ENCODE measurements at regions of chr17 and their contacts with region 1.

Region 1: DNA sequence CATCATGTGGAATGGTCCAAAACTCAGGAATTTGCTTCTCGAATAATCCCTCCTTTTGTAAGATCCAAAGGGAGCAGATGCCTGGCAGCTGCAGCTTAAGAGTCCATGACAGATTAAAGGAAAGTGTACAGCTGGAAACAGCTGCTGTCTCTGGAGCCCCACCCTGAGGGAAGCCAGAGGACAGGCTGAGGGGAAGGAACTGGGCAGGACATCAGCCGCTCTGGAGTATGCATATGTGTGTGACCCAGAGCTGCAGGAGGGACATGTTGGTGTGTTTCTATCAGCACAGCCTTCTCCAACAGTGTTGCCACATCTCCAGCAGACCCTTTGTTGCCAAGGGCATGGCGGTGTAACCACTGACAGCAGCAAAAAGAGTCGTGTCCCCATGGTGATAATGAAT is 46.2 kb downstream of the CYB561 start:
- DNase-seq: peak; percentile 45
- ATAC-seq: peak; percentile 52
- H3K4me3 ChIP-seq: no peak overlapping the region
- H3K27ac ChIP-seq: peak overlapping the region; percentile 24; the same call in 1 of the 2 replicates
- H3K4me1 ChIP-seq: peaks cover 21% of the 10 kb centered on the region
- H3K27me3 ChIP-seq: no peaks in the 10 kb centered on the region
- CTCF ChIP-seq: no peak
- POLR2A ChIP-seq: no peak
- RAD21 ChIP-seq: no peak

Region 2: GRCh38 chr17:62692721-62693483 is 707.0 kb before region 1 on chr17:
- CTCF ChIA-PET with region 1: no interaction called
- POLR2A ChIA-PET with region 1: no interaction called
- dilution Hi-C with region 1: no loop called
- in situ Hi-C with region 1: loop called (anchors 10 kb)
- intact Hi-C with region 1: no loop called
- DNase-seq: no peak
- ATAC-seq: peak; percentile 62
- H3K4me3 ChIP-seq: no peak overlapping the region
- H3K27ac ChIP-seq: no peak overlapping the region
- H3K4me1 ChIP-seq: peaks cover 3% of the 10 kb centered on the region; the same call in 1 of the 2 replicates
- H3K27me3 ChIP-seq: no peaks in the 10 kb centered on the region
- CTCF ChIP-seq: peak; percentile 47
- POLR2A ChIP-seq: no peak
- RAD21 ChIP-seq: peak; percentile 43

Region 3: DNA sequence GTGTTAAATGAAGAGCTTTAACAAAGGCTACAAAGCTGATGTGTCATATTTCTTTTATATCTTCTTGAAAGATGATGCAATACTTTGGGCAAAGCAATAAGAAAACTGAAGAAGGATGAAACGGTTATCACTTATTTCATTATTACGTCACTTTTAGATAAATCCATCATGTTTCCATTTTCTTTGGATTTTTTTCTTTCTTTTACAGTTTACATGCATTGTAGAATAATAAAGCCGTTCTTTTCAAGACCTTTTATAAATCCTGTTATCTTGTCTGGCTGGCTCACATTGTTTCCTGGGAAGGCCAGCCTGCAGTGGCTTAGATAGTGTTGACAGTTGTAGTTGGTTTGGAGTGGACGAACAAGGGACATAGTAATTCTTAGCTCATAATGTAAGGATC is 404.9 kb before region 1 on chr17:
- CTCF ChIA-PET with region 1: no interaction called
- POLR2A ChIA-PET with region 1: no interaction called
- dilution Hi-C with region 1: no loop called
- in situ Hi-C with region 1: no loop called
- intact Hi-C with region 1: loop called (anchors 5 kb)
- DNase-seq: peak; percentile 15
- ATAC-seq: no peak
- H3K4me3 ChIP-seq: no peak overlapping the region
- H3K27ac ChIP-seq: no peak overlapping the region
- H3K4me1 ChIP-seq: no peaks in the 10 kb centered on the region
- H3K27me3 ChIP-seq: no peaks in the 10 kb centered on the region
- CTCF ChIP-seq: no peak
- POLR2A ChIP-seq: no peak
- RAD21 ChIP-seq: no peak

Region 4: DNA sequence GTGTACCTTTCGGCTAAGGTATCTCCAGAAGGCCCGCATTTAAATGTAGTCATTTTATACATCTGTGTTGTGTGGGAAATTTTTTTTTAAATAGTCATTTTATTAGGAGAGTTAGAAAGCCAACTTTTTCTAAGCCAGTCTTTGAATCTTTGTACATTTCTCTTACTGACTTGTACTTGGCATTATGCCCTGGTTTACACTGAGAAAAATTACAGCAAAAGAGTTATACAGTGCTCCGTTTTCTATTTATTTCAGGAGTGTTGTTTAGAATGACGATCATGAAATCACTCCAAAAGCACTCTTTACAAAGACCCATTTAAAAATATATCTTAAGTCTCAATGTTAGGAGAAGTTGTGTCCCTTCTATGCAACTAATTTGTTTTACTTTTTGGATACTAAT is 45.6 kb before region 1 on chr17:
- CTCF ChIA-PET with region 1: no interaction called
- POLR2A ChIA-PET with region 1: no interaction called
- dilution Hi-C with region 1: no loop called
- in situ Hi-C with region 1: no loop called
- intact Hi-C with region 1: loop called (anchors 5 kb)
- DNase-seq: peak; percentile 57
- ATAC-seq: peak; percentile 6; the same call in 1 of the 2 replicates
- H3K4me3 ChIP-seq: no peak overlapping the region
- H3K27ac ChIP-seq: peak overlapping the region; percentile 85; the same call in 1 of the 2 replicates
- H3K4me1 ChIP-seq: peaks cover 28% of the 10 kb centered on the region
- H3K27me3 ChIP-seq: no peaks in the 10 kb centered on the region
- CTCF ChIP-seq: no peak
- POLR2A ChIP-seq: no peak
- RAD21 ChIP-seq: no peak

Region 5: DNA sequence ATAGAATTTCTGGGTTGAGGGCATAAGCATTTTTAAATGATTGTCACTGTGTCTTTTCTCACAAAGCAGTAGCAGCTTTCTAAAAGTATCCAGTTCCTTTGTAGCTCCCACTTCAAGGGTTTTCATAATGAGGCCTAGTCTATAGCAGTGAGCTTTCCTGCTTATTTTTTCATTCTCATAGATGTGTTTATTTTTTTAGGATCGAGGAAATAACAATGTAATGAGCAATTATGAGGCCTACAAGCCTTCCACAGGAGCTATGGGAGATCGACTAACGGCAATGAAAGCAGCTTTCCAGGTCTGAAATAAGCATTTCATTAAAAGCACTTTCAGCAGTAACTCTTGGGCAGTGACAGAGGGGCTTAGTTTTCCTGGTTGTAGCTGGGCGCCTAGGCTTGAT is 416.8 kb after region 1 on chr17:
- CTCF ChIA-PET with region 1: no interaction called
- POLR2A ChIA-PET with region 1: no interaction called
- dilution Hi-C with region 1: no loop called
- in situ Hi-C with region 1: no loop called
- intact Hi-C with region 1: no loop called
- DNase-seq: peak; percentile 81
- ATAC-seq: peak; percentile 83
- H3K4me3 ChIP-seq: no peak overlapping the region
- H3K27ac ChIP-seq: peak overlapping the region; percentile 68
- H3K4me1 ChIP-seq: peaks cover 20% of the 10 kb centered on the region
- H3K27me3 ChIP-seq: no peaks in the 10 kb centered on the region
- CTCF ChIP-seq: no peak
- POLR2A ChIP-seq: no peak
- RAD21 ChIP-seq: no peak

Measured in IMR-90 (cell line).